ENCODE measurements at regions of chr10 and their contacts with region 1.

Region 1: GRCh38 chr10:86673827-86674581 is 5.7 kb downstream of the LDB3 start:
- DNase-seq: no peak
- H3K4me3 ChIP-seq: no peak overlapping the region
- CTCF ChIP-seq: no peak
- POLR2A ChIP-seq: no peak

Region 2: GRCh38 chr10:86599729-86600128 is 74.3 kb before region 1 on chr10:
- intact Hi-C with region 1: no loop called
- DNase-seq: peak in 1 of 2 donors; percentile 84
- H3K4me3 ChIP-seq: no peak overlapping the region
- CTCF ChIP-seq: no peak
- POLR2A ChIP-seq: no peak

Region 3: GRCh38 chr10:86706401-86706841 is 32.4 kb after region 1 on chr10:
- intact Hi-C with region 1: loop called (anchors 1 kb)
- DNase-seq: no peak
- H3K4me3 ChIP-seq: no peak overlapping the region
- CTCF ChIP-seq: no peak
- POLR2A ChIP-seq: no peak

Measured in lower leg skin (tissue), 4 donors.